Dorsolateral prefrontal cortex (tissue), 120 donors: ENCODE measurements at regions of chr7 and their contacts with region 1.

Region 1: GRCh38 chr7:28853834-28854749 is 104.0 kb downstream of the TRIL start:
- DNase-seq: peak; percentile 78 to 93 (median 84)
- H3K4me3 ChIP-seq: peak overlapping the region; percentile 31 to 91 (median 71)
- H3K27ac ChIP-seq: peak overlapping the region in 26 of 59 donors; percentile 6 to 80 (median 46)
- H3K27me3 ChIP-seq: peaks cover 0 to 12% (median 0%) of the 10 kb centered on the region in 45 donors
- CTCF ChIP-seq: peak; percentile 74 to 98 (median 94)

Region 2: GRCh38 chr7:28389504-28390395 is 464.3 kb before region 1 on chr7:
- intact Hi-C with region 1: loop called (anchors 2 kb)
- DNase-seq: peak in 1 of 10 donors; percentile 33
- H3K4me3 ChIP-seq: peak overlapping the region in 58 of 59 donors; percentile 8 to 67 (median 44)
- H3K27ac ChIP-seq: peak overlapping the region in 34 of 59 donors; percentile 0 to 79 (median 52)
- H3K27me3 ChIP-seq: peaks cover 0 to 4% (median 0%) of the 10 kb centered on the region in 45 donors
- CTCF ChIP-seq: peak; percentile 73 to 92 (median 84)

Region 3: GRCh38 chr7:28587211-28587610 is 266.9 kb before region 1 on chr7:
- intact Hi-C with region 1: no loop called
- DNase-seq: no peak
- H3K4me3 ChIP-seq: no peak overlapping the region
- H3K27ac ChIP-seq: no peak overlapping the region
- H3K27me3 ChIP-seq: peaks cover 0 to 7% (median 0%) of the 10 kb centered on the region in 45 donors
- CTCF ChIP-seq: no peak

Region 4: GRCh38 chr7:28615091-28615490 is 239.0 kb before region 1 on chr7:
- intact Hi-C with region 1: loop called in 1 of 2 experiments (anchors 5 kb)
- DNase-seq: peak in 4 of 10 donors; percentile 22 to 46 (median 41)
- H3K4me3 ChIP-seq: no peak overlapping the region
- H3K27ac ChIP-seq: no peak overlapping the region
- H3K27me3 ChIP-seq: peaks cover 0 to 4% (median 0%) of the 10 kb centered on the region in 45 donors
- CTCF ChIP-seq: peak in 46 of 56 donors; percentile 6 to 65 (median 34)

Region 5: DNA sequence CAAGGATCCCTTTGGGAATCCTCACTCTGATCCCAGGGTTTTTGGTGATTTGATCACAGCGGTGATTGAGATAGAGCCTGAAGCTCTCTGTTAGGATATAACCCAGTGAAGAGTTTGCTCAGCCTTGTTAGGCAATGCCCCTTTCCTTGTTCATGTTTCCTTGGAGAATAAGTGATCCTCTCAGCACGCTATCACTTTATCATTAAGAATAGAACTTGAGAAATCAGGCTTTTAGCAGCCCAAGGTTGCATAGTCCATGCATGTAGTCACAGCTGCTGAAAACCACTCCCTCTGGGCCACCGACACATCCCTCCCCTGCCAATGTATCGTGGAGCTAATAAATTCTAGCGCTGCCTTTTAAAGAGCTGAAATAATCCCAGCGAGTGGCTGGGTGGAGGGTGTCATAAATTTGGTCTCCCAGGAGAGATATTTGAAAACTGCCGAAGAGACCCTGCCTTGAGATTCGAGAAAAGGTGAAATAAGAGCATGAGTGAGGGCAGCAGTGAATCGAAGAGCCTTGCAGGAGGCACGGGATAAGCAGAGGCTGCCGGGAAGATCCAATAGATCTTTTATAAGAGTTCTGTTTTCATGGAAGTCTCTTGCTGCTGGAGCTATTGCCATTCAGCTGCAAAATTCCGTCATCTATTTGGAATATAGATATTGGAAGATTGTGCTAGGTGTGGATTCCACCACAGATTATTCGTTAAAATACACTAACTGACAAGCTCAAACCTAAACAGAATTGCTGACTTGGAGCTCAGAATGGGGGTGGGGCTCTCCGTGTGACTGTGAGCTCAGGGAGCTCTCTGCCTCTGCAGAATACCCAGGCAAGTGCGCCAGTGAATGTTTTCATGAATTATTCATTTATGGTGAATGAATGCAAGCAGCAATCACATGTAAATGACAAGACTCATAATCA is 145.8 kb before region 1 on chr7:
- intact Hi-C with region 1: loop called in 1 of 2 experiments (anchors 5 kb)
- DNase-seq: peak in 8 of 10 donors; percentile 59 to 84 (median 79)
- H3K4me3 ChIP-seq: peak overlapping the region in 57 of 59 donors; percentile 6 to 63 (median 39)
- H3K27ac ChIP-seq: peak overlapping the region; percentile 18 to 98 (median 85)
- H3K27me3 ChIP-seq: no peaks in the 10 kb centered on the region
- CTCF ChIP-seq: peak in 3 of 56 donors; percentile 12 to 29 (median 15)

Region 6: DNA sequence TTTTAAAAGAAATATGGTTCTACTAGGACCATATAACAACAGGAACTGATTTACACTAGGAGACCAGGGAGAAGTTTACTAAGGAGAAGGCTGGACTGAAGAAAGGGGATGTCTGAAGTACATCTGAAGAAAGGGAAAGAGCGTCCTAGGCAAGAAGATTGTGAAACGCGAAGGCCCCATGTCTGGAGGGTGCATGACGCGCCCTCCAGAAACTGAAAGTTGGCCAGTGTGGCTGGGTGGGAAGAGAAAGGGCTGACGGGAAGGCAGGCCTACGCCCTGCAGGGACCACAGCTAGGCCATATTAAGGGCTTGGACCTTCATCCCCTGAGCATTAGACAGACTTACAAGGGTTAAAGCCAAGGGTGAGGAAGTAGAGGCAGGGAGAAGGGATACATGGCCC is 53.9 kb before region 1 on chr7:
- intact Hi-C with region 1: no loop called
- DNase-seq: no peak
- H3K4me3 ChIP-seq: no peak overlapping the region
- H3K27ac ChIP-seq: peak overlapping the region in 18 of 59 donors; percentile 1 to 61 (median 41)
- H3K27me3 ChIP-seq: no peaks in the 10 kb centered on the region
- CTCF ChIP-seq: no peak

Region 7: GRCh38 chr7:28879105-28879504 is 25.0 kb after region 1 on chr7:
- intact Hi-C with region 1: no loop called
- DNase-seq: no peak
- H3K4me3 ChIP-seq: no peak overlapping the region
- H3K27ac ChIP-seq: no peak overlapping the region
- H3K27me3 ChIP-seq: peaks cover 0 to 22% (median 2%) of the 10 kb centered on the region in 45 donors
- CTCF ChIP-seq: no peak